ENCODE measurements at regions of chr15 and their contacts with region 1.

Region 1: DNA sequence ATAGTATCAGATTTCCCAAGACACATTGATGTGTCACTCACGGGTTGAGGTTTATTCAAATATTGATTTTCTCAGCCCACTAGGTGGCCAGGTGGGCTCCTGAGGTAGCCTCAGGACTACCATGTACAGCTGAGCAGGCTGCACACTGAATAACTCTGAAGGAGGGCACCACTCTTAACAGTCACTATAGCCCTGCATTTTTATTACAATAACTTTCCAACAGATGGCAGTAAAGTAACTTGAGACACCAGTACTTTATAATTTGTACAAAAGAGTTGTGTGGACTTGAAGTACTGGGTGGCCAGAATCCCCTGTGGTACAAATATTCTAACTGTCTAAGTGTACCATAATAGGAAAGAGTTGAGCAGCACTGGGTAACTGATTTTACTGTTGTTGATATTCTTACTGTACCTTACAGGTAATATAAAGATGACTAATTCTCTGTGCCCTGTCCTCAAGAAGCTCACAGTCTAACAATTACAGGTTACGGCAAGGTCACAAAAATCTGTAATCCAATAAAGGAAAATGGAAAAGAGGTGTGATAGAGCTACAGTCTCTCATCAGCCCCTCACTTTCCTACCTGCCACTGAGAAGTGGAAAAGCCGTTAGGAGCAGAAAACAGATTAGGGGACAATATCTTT is 76.0 kb downstream of the ETFA start:
- DNase-seq: no peak
- ATAC-seq: peak; percentile 39 to 93
- H3K4me3 ChIP-seq: no peak overlapping the region
- H3K27ac ChIP-seq: no peak overlapping the region
- H3K4me1 ChIP-seq: peaks cover 3 to 17% of the 10 kb centered on the region in 2 donors
- H3K27me3 ChIP-seq: no peaks in the 10 kb centered on the region
- CTCF ChIP-seq: peak in 4 of 5 experiments; percentile 34 to 63 (median 42)
- POLR2A ChIP-seq: no peak

Region 2: DNA sequence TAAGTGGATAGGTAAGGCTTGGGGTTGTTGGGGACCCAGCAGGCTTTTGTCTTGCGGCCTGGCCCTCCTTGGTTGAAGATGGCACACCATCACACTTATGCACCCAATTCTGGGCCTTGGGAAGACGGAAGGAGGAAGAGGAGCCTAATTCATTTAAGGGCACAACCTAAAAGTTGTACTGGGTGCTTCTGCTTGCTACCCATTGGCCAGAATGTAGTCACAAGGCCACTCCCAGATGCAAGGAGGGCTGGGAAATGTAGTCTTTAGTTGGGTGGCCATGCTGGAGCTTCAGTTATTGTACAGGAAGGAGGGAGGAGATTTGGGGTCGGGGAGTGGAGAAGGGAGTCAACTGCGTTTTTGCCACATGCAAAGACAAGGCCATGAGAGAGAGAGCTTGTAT is 66.3 kb before region 1 on chr15:
- in situ Hi-C with region 1: no loop called
- intact Hi-C with region 1: no loop called
- DNase-seq: no peak
- ATAC-seq: peak in 1 of 2 donors; percentile 49
- H3K4me3 ChIP-seq: no peak overlapping the region
- H3K27ac ChIP-seq: no peak overlapping the region
- H3K4me1 ChIP-seq: peaks cover 13 to 14% of the 10 kb centered on the region in 2 donors
- H3K27me3 ChIP-seq: no peaks in the 10 kb centered on the region
- CTCF ChIP-seq: no peak
- POLR2A ChIP-seq: no peak

Region 3: GRCh38 chr15:76299786-76300185 is 64.5 kb after region 1 on chr15:
- in situ Hi-C with region 1: no loop called
- intact Hi-C with region 1: loop called (anchors 5 kb)
- DNase-seq: no peak
- ATAC-seq: no peak
- H3K4me3 ChIP-seq: no peak overlapping the region
- H3K27ac ChIP-seq: no peak overlapping the region
- H3K4me1 ChIP-seq: peaks cover 8 to 43% of the 10 kb centered on the region in 2 donors
- H3K27me3 ChIP-seq: no peaks in the 10 kb centered on the region
- CTCF ChIP-seq: no peak
- POLR2A ChIP-seq: no peak

Region 4: DNA sequence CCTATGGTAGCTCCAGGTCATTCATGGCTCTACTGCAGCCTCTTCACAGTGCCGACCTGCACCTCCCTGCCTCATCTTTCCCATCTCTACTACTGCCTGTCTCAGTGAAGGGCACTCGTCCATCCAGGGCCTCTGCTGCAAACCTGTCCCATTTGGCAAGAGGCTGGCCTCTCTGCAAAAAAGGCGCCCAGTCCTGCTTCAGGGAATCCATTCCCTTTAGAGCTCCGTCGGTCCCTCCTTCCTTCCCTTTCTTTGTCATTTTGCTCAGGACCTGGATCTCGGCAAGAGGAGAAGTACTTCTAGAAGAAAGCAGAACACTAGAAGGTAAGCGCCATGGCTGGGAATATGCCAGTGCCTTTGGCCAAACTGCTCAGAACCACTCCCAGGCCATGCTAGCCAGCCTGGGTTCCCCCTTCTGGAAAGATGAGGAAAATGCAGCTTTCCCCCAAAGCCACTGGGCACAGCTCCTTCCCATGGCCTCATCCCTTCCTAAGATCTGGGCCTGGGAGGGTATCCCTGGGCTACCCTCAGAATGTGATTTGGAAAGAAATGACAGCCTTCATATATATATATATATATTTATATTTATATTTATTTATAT is 94.9 kb after region 1 on chr15:
- in situ Hi-C with region 1: no loop called
- intact Hi-C with region 1: loop called (anchors 1 kb)
- DNase-seq: peak in 1 of 2 donors; percentile 64
- ATAC-seq: peak; percentile 63 to 67
- H3K4me3 ChIP-seq: no peak overlapping the region
- H3K27ac ChIP-seq: no peak overlapping the region
- H3K4me1 ChIP-seq: peaks cover 4 to 14% of the 10 kb centered on the region in 2 donors
- H3K27me3 ChIP-seq: peaks cover 19 to 25% (median 24%) of the 10 kb centered on the region in 3 donors
- CTCF ChIP-seq: peak; percentile 42 to 63 (median 47)
- POLR2A ChIP-seq: no peak